ENCODE measurements at regions of chr3 and their contacts with region 1.

Region 1: GRCh38 chr3:49422379-49423248 is at the start of gene AMT:
- DNase-seq: peak; percentile 60
- ATAC-seq: peak; percentile 70 to 89 (median 82)
- H3K4me3 ChIP-seq: peak within 1 kb of the TSS; percentile 19 to 60 (median 51)
- H3K27ac ChIP-seq: peak within 1 kb of the TSS in 9 of 10 donors; percentile 10 to 75 (median 60)
- H3K4me1 ChIP-seq: peaks cover 0 to 29% (median 6%) of the 10 kb centered on the region in 9 donors
- H3K27me3 ChIP-seq: no peaks in the 10 kb centered on the region
- CTCF ChIP-seq: no peak
- total RNA-seq, gene AMT: 21.3 to 40.9 (median 34.3) TPM

Region 2: DNA sequence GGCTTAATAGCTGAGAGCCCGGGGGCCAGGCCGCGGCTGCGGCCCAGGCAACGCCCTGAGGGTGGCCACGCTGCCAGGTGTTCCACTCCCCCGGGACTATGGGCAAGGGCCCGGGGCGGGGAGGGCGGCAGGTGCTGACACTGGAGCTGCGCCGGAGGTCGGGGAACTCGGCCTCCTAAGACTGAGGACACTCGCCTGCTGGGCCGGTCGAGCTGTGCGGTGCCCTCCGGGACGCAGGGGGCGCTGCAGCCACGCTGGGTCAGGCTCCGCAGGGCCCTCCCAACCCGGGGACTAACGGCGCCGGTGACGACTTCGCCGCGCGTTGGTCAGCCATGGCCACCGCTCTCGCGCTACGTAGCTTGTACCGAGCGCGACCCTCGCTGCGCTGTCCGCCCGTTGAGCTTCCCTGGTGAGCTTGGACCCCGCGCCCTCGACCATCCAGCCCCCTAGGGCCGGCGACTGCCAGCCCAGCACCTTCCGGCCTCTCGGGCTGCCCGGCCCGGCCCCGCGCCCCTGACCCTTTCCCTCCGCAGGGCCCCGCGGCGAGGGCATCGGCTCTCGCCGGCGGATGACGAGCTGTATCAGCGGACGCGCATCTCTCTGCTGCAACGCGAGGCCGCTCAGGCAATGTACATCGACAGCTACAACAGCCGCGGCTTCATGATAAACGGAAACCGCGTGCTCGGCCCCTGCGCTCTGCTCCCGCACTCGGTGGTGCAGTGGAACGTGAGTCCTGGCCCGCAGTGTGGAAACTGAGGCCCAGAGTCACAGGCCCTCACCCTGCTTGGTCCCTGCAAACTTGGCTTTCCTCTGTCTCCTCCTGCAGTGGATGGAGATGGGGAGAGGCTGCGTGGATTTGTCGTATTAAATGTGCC is 400.6 kb before region 1 on chr3 and contains the start of gene NDUFAF3:
- intact Hi-C with region 1: loop called in 1 of 10 experiments (anchors 10 kb)
- DNase-seq: peak; percentile 92 to 95
- ATAC-seq: peak; percentile 82 to 91 (median 89)
- H3K4me3 ChIP-seq: peak within 1 kb of the TSS; percentile 69 to 99 (median 92)
- H3K27ac ChIP-seq: peak within 1 kb of the TSS; percentile 98 to 100 (median 100)
- H3K4me1 ChIP-seq: peaks cover 8 to 72% (median 49%) of the 10 kb centered on the region in 9 donors
- H3K27me3 ChIP-seq: no peaks in the 10 kb centered on the region
- CTCF ChIP-seq: peak; percentile 92 to 100 (median 99)
- total RNA-seq, gene NDUFAF3: 154 to 186 (median 167) TPM

Region 3: DNA sequence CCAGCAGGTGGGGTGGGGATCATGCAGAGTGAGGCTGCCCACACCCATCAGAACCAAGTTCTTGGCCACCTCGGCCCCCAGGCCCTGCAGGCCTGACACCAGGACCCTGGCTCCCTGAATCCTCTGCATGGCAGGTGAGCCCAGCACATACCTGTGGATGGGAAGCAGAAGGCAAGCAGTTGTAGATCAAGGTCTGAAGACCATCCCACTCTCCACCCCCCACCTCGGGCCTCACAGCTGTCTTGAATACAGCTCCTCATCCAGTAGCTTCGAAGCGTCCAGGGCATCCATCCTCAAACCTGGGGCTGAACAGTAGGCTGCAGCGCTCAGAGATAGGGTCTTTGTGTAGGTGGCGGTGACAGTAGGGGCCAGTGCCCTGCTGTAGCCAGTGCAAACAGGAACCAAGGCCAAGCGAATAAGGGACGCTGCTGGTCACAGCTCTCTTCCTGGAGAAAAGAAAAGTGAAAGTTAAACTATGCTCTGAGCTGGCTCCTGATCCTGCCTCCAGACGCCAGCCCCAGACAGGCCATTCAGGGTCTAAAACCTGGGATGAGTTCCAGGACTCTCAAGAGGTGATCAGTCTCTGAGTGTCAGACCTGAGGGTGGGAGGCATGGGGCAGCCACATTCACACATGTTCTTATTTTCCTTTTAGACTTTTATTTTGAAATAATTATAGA is 391.0 kb after region 1 on chr3 and contains the start of gene UBA7:
- intact Hi-C with region 1: no loop called
- DNase-seq: peak; percentile 50 to 75
- ATAC-seq: peak; percentile 81 to 94 (median 94)
- H3K4me3 ChIP-seq: peak within 1 kb of the TSS; percentile 37 to 67 (median 58)
- H3K27ac ChIP-seq: peak within 1 kb of the TSS; percentile 4 to 91 (median 83)
- H3K4me1 ChIP-seq: peaks cover 10 to 36% (median 27%) of the 10 kb centered on the region in 9 donors
- H3K27me3 ChIP-seq: no peaks in the 10 kb centered on the region
- CTCF ChIP-seq: no peak
- total RNA-seq, gene UBA7: 13.1 to 47.0 (median 22.0) TPM

Measured in heart right ventricle (tissue), 16 donors.